ENCODE measurements at regions of chr5 and their contacts with region 1.

Region 1: GRCh38 chr5:151345808-151346478 is 1.4 kb downstream of the SLC36A2 start:
- DNase-seq: no peak
- H3K4me3 ChIP-seq: no peak overlapping the region
- CTCF ChIP-seq: no peak

Region 2: DNA sequence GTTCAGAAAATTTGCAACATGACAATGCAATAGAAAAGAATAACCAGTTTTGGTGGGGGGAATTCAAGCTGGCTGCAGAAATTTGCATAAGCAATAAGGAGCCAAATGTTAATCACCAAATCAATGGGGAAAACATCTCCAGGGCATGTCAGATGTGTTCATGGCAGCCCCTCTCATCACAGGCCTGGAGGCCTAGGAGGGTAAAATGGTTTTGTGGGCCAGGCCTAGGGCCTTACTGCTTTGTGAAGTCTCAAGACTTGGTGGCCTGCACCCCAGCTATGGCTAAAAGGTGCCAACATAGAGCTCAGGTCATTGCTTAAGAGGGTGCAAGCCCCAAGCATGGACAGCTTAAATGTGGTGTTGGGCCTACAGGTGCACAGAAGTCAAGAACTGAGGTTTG is 71.8 kb after region 1 on chr5:
- in situ Hi-C with region 1: no loop called
- DNase-seq: no peak
- H3K4me3 ChIP-seq: no peak overlapping the region
- CTCF ChIP-seq: no peak

Region 3: DNA sequence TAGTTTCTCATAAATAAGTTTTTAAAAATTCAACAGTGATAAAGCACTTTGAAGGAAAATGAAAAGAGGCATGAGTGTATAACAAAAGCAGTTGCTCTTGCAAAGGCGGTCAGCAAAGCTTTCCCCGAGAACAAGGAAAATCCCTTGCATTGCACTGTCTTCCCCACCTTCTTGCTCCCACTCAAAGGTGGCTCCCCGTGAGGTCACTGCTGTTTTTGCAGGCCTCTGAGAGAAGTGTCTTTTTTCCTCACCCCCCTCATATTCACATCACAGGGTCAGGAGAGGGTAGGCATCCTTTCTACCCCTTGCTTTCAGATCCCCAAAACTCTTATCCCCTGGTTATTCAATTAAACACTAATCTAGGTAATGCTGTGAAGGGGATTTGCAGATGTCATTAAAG is 86.3 kb after region 1 on chr5:
- in situ Hi-C with region 1: loop called (anchors 5 kb)
- DNase-seq: no peak
- H3K4me3 ChIP-seq: no peak overlapping the region
- CTCF ChIP-seq: no peak

Measured in astrocyte of the cerebellum (primary cell).